ENCODE measurements at regions of chr16 and their contacts with region 1.

Region 1: DNA sequence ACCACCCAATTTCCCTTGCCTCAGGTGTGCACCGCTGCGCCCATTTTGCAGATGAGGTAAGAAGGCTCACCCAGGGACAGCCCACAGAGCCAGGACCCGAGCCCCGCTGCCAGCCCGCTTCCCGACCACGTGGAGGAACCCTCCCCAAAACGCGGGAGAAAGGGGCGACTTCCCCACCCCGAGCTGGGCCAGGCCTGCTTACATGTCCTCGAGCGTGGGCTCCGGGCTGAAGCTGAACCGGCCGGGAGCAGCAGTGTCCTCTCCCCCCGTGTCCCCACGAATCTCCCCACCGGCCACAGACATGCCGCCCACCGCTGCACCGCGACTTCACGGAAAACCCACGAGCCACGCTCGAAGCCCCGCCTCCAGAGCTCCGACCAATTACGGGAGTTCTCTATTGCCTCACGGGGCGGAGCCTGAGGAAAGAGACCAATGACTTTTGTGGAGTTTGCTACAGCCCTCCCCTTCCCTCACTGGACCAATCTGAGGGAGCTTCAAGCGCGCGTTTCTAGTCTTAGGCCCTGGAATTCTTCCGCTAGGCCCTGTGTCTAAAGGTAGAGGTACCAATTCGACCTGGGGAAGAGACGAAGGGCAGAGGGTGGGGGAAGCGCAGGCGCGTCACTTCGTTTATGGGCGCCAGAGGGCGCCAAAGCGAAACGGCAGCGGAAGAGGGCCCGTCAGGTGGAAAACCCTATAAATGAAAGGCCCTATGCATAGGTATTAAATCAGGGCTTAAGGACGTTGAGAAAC is at the start of gene DCTPP1:
- DNase-seq: peak; percentile 98
- H3K4me3 Mint-ChIP-seq: no peak within 1 kb of the TSS
- H3K27ac Mint-ChIP-seq: no peak within 1 kb of the TSS
- H3K4me1 Mint-ChIP-seq: peaks cover 39% of the 10 kb centered on the region
- H3K27me3 Mint-ChIP-seq: no peaks in the 10 kb centered on the region
- total RNA-seq, gene DCTPP1: 69.9 to 73.0 TPM

Region 2: GRCh38 chr16:30378236-30379204 is 51.3 kb before region 1 on chr16:
- CTCF ChIA-PET with region 1: interaction called, 5 read pairs
- intact Hi-C with region 1: loop called (anchors 1 kb)
- DNase-seq: peak; percentile 100
- H3K4me3 Mint-ChIP-seq: peak overlapping the region; percentile 99
- H3K27ac Mint-ChIP-seq: peak overlapping the region; percentile 99
- H3K4me1 Mint-ChIP-seq: peaks cover 43% of the 10 kb centered on the region
- H3K27me3 Mint-ChIP-seq: no peaks in the 10 kb centered on the region

Region 3: DNA sequence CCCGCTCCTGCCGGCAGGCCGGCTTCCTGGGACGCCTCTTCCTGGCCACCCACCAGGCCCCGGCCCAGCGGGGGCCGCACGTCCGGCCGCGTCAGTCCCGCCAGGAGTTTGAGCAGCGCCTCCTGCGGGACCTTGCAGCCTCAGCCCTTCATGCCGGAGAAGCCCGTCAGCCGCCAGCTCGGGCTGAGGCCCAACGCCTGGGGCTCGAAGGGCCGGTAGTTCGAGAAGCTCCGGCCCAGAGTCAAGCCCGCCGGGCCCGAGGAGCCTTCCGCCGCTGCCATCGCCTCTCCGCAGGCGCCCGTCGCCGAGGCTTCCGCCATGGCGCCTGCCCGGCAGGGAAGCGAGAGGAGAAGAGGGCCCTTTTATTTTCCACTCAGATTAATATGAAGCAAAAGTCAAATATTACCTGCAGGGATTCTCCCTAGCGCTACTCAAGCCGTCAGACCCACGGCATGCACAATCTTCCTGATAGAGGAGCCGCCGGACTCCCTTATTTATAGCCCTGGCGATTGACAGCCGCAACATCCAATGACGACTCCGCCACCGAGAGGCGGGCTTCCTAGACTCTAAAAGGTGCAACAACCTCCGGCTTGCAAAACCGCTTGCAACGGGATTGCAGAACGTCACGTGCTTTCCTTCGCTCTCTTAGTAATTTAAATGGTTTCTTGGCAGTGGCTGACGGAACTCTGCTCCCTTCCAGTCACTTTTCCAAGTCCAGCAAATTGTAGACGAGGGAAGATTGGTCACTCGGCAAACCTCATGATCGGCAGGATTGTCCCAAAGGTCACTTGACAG is 15.8 kb after region 1 on chr16 and contains the start of gene SEPHS2:
- CTCF ChIA-PET with region 1: interaction called, 23 read pairs
- intact Hi-C with region 1: loop called (anchors 1 kb)
- DNase-seq: peak; percentile 100
- H3K4me3 Mint-ChIP-seq: peak within 1 kb of the TSS; percentile 87
- H3K27ac Mint-ChIP-seq: peak within 1 kb of the TSS; percentile 93
- H3K4me1 Mint-ChIP-seq: peaks cover 39% of the 10 kb centered on the region
- H3K27me3 Mint-ChIP-seq: no peaks in the 10 kb centered on the region
- total RNA-seq, gene SEPHS2: 37.8 to 39.2 TPM

Region 4: GRCh38 chr16:30491744-30492308 is 62.0 kb after region 1 on chr16:
- CTCF ChIA-PET with region 1: interaction called, 10 read pairs
- intact Hi-C with region 1: no loop called
- DNase-seq: peak; percentile 65
- H3K4me3 Mint-ChIP-seq: no peak overlapping the region
- H3K27ac Mint-ChIP-seq: peak overlapping the region; percentile 59
- H3K4me1 Mint-ChIP-seq: peaks cover 29% of the 10 kb centered on the region
- H3K27me3 Mint-ChIP-seq: no peaks in the 10 kb centered on the region

Region 5: DNA sequence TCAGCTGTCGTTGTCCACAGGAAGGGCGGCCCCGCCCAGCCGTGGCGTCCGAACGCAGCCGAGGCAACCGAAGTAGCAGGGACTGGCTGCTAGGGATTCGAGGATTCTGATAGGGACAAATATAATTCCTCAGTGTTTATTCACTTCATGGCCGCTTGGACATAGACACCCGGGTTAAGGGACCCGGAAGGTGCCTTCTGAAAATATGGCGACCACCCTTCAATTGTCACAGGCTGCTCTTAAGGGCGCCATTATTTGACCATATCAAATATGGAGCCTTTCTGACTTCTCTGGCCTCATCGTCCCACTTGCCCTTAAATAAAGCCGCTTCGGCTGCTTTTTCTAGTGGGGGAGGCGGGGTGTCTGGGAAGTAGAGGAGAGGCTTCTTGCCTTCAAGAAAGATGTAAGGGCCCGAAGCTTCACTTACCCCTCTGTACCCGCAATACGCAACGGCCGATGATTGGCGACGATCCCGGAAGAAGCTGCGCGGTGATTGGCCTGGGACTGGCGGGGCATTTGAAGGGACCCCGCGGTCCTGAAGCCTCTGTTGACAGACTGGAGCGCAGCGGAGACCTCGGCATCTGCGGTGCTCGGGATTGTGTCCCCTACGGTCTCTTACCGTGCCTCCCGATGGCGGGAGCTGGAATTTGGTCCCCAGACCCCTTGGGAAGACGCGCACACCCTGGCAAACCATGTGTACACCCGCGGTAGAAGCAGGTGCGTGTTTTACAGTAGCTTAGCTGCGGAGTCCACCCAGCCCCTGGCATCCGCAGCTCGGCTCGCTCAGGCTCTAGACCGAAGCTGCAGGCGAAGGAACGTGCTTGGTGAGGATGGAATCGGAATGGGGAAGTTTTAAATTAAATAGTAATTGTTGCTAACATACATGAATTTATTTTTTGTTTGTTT is 142.1 kb after region 1 on chr16 and contains the start of gene ZNF688:
- CTCF ChIA-PET with region 1: interaction called, 7 read pairs
- intact Hi-C with region 1: loop called (anchors 1 kb)
- DNase-seq: peak; percentile 94
- H3K4me3 Mint-ChIP-seq: peak within 1 kb of the TSS; percentile 89
- H3K27ac Mint-ChIP-seq: peak within 1 kb of the TSS; percentile 94
- H3K4me1 Mint-ChIP-seq: peaks cover 56% of the 10 kb centered on the region
- H3K27me3 Mint-ChIP-seq: no peaks in the 10 kb centered on the region
- total RNA-seq, gene ZNF688: 3.7 to 3.9 TPM

Region 6: GRCh38 chr16:30609926-30610839 is 180.3 kb after region 1 on chr16 and contains the start of gene ZNF689:
- CTCF ChIA-PET with region 1: interaction called, 25 read pairs
- intact Hi-C with region 1: loop called (anchors 1 kb)
- DNase-seq: peak; percentile 98
- H3K4me3 Mint-ChIP-seq: peak within 1 kb of the TSS; percentile 83
- H3K27ac Mint-ChIP-seq: peak within 1 kb of the TSS; percentile 96
- H3K4me1 Mint-ChIP-seq: peaks cover 20% of the 10 kb centered on the region
- H3K27me3 Mint-ChIP-seq: no peaks in the 10 kb centered on the region
- total RNA-seq, gene ZNF689: 10.7 to 11.5 TPM

Region 7: DNA sequence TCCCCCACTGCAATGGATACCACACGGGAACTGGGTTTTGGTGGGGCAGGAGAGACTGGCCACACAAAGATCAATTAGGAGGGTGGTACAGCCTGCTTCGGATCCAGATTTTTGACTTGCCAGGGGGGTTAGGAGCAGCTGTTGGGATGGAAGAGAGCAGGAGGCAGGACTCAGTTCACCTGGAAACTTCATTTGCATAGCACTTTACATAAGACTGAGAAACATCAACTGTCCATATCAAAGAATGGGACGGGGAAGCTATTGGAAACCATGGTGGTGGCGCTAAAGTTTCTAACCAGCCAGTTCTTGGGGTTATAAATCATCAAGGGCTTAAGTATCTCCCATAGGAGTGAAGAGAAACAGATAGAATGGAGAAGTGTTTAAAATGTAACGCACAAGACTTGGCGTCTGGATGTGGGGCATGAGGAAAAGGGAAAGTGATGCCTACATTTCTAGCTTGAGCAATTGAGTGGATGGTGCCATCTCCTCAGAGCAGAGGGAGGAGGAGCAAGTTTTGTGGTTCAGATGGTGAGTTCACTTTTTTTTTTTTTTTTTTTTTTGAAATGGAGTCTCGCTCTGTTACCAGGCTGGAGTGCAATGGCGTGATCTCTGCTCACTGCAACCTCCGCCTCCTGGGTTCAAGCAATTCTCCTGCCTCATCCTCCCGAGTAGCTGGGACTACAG is 262.7 kb after region 1 on chr16:
- CTCF ChIA-PET with region 1: interaction called, 3 read pairs
- intact Hi-C with region 1: loop called (anchors 1 kb)
- DNase-seq: no peak
- H3K4me3 Mint-ChIP-seq: no peak overlapping the region
- H3K27ac Mint-ChIP-seq: no peak overlapping the region
- H3K4me1 Mint-ChIP-seq: peaks cover 15% of the 10 kb centered on the region
- H3K27me3 Mint-ChIP-seq: no peaks in the 10 kb centered on the region

Measured in activated naive CD4-positive, alpha-beta T cell treated with anti-CD3 and anti-CD28 coated beads for 36 hours (primary cell).